Natural killer cell (primary cell): ENCODE measurements at regions of chr1 and their contacts with region 1.

Region 1: DNA sequence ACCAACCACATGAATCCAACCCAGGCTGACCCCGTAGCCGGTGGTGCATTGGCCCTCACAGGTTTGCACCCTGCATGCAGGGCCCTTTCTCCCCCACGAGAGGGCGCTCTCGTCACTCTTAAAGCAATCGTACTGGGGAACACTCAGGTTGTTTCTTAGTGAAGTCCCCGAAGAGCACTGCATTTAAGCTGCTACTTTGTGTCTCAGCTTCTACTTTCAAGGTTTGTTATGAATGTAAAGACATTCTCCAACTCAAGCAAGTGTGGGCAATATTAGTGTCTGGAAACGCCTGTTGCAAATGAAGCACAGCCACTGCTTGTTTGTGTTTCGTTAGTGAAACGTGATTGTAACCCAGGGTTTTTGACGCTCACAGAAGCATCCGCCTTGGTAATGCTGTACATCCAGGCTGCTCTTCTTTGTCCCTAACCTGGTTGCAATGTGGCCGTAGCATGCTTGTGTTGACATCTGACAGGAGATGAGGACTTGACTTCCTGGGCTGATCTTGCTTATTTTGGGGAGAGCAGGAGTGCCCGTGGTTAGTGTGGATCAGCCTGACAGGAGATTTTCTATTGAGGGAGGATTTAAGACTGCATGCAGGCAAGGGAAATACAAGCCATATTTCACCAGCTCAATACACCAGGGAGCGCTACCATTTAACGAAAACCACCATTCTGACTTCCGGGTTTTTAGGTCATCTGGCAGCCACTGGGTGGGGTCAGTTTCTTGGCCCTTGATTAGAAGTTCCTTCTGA is 79.8 kb downstream of the ST6GALNAC3 start:
- DNase-seq: peak; percentile 71 to 85
- ATAC-seq: peak; percentile 92 to 94 (median 94)
- H3K4me3 ChIP-seq: peak overlapping the region; percentile 36
- H3K4me3 Mint-ChIP-seq: peak overlapping the region; percentile 94
- H3K27ac ChIP-seq: peak overlapping the region; percentile 62
- H3K27ac Mint-ChIP-seq: peak overlapping the region; percentile 86 to 95
- H3K4me1 ChIP-seq: peaks cover 9% of the 10 kb centered on the region
- H3K4me1 Mint-ChIP-seq: peaks cover 13 to 15% of the 10 kb centered on the region in 2 donors
- H3K27me3 ChIP-seq: no peaks in the 10 kb centered on the region
- H3K27me3 Mint-ChIP-seq: no peaks in the 10 kb centered on the region
- CTCF ChIP-seq: peak; percentile 98

Region 2: DNA sequence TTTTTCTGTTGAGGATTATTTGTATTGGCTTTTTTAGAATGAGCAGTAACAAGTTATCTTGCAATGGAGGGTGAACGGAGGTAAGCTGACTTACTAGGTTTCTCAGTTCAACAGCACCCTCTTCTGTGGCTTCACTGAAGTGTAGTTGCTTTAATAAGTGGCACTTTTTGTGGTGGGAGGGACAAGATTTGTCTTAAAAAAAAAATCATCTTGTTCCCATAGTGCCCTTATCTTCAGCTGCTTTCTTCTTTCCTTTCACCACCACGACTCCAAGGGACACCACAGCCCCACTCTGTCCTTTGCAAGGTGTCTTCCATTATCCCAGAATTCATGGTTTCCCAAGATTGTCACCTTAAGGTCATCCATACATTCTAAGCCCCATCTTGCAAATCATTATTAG is 971.9 kb after region 1 on chr1:
- intact Hi-C with region 1: loop called (anchors 1 kb)
- DNase-seq: peak in 1 of 2 donors; percentile 63
- ATAC-seq: peak in 2 of 3 donors; percentile 31 to 50
- H3K4me3 ChIP-seq: no peak overlapping the region
- H3K4me3 Mint-ChIP-seq: no peak overlapping the region
- H3K27ac ChIP-seq: no peak overlapping the region
- H3K27ac Mint-ChIP-seq: no peak overlapping the region
- H3K4me1 ChIP-seq: no peaks in the 10 kb centered on the region
- H3K4me1 Mint-ChIP-seq: peaks cover 0 to 4% of the 10 kb centered on the region in 2 donors
- H3K27me3 ChIP-seq: no peaks in the 10 kb centered on the region
- H3K27me3 Mint-ChIP-seq: no peaks in the 10 kb centered on the region
- CTCF ChIP-seq: peak; percentile 9

Region 3: DNA sequence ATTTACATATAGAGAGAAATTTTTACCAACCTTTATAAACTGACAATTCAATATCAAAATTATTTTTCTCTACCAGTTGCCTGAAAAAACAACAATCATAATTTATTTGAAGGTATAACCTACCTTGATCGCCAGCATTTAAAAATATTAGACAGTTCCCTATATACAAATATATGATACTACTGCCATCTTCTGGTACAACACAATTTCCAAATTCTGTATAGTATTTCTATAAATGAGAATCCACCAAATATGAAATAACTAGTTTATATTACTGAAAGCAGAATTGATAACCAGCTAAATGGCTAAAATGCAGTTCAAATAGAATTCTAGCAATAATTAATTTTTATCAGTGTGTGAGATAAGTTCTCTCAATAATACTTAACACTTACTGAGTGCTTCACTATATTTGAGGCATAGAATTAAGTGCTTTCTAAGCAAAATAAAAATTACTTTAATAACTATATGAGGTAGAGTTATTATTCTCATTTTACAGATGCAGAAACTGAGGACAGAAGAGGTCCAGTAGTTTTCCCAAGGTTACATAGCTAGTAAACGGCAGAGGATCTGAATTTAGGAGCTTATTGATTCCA is 989.2 kb after region 1 on chr1:
- intact Hi-C with region 1: loop called (anchors 1 kb)
- DNase-seq: peak in 1 of 2 donors; percentile 44
- ATAC-seq: no peak
- H3K4me3 ChIP-seq: no peak overlapping the region
- H3K4me3 Mint-ChIP-seq: no peak overlapping the region
- H3K27ac ChIP-seq: no peak overlapping the region
- H3K27ac Mint-ChIP-seq: no peak overlapping the region
- H3K4me1 ChIP-seq: no peaks in the 10 kb centered on the region
- H3K4me1 Mint-ChIP-seq: peaks cover 0 to 5% of the 10 kb centered on the region in 2 donors
- H3K27me3 ChIP-seq: no peaks in the 10 kb centered on the region
- H3K27me3 Mint-ChIP-seq: no peaks in the 10 kb centered on the region
- CTCF ChIP-seq: no peak

Region 4: DNA sequence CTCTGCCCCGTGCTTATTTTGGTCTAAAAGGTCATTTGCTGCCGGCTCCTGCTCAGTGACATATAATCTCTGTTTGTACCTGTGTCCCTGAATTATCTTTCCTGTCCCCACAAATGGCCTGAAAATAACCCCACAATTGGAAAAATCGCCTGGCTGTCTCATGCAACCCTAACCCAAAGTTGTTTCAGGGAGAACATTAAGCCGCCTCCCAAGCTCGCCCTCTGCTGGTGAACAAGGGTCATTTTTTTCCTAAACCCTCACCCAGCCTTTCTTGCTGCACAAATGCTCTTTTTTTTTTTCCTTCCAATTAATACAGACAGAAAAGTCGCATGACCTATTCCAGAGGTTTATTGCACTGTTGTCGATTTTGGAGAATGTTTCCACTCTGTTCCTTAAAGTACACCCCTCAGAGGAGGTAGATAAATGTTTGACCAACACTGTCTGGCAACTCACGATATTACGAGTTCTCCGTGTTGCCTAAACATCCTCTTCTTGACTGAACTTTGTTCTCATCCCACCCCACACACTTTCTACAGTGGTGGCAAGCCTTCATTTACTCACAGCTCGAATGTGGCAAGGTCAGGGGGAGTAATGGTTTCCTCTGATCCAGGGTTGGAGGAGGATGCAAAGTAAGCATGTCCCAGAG is 1379.4 kb after region 1 on chr1:
- intact Hi-C with region 1: loop called (anchors 1 kb)
- DNase-seq: peak; percentile 42 to 83
- ATAC-seq: peak in 2 of 3 donors; percentile 75 to 76
- H3K4me3 ChIP-seq: no peak overlapping the region
- H3K4me3 Mint-ChIP-seq: peak overlapping the region; percentile 54
- H3K27ac ChIP-seq: no peak overlapping the region
- H3K27ac Mint-ChIP-seq: peak overlapping the region in 1 of 2 donors; percentile 41
- H3K4me1 ChIP-seq: peaks cover 9% of the 10 kb centered on the region
- H3K4me1 Mint-ChIP-seq: peaks cover 8 to 10% of the 10 kb centered on the region in 2 donors
- H3K27me3 ChIP-seq: no peaks in the 10 kb centered on the region
- H3K27me3 Mint-ChIP-seq: no peaks in the 10 kb centered on the region
- CTCF ChIP-seq: peak; percentile 76

Region 5: DNA sequence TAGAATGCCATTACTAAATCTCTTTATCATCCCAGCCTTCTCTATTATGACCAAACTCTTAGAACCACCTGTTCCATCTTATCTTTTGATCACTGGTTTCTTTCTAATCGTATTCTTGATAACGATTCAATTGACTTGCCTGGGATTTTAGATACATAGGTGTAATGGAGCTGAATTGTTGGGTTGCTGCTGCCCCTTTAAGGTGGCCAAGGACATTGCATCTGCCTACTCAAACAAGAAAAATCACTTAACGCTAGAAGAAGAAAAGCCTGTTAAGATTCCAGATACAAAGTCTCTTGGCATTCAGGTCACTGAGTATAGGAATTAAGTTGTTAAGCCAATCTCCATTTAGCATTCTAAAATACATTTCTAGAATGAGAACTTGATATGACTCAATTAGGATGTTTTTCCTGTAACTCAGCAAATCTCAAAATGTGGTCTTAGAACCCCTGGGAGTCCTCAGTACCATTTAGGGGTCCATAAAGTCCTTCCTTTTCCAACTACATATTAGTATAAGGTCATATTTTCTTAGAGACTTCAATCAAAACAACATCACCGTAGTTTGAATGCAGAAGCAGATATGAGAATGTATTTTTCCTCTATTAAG is 1746.4 kb after region 1 on chr1:
- intact Hi-C with region 1: loop called (anchors 5 kb)
- DNase-seq: peak in 1 of 2 donors; percentile 43
- ATAC-seq: peak in 1 of 3 donors; percentile 39
- H3K4me3 ChIP-seq: no peak overlapping the region
- H3K4me3 Mint-ChIP-seq: no peak overlapping the region
- H3K27ac ChIP-seq: no peak overlapping the region
- H3K27ac Mint-ChIP-seq: no peak overlapping the region
- H3K4me1 ChIP-seq: no peaks in the 10 kb centered on the region
- H3K4me1 Mint-ChIP-seq: no peaks in the 10 kb centered on the region
- H3K27me3 ChIP-seq: no peaks in the 10 kb centered on the region
- H3K27me3 Mint-ChIP-seq: peaks cover 0 to 2% of the 10 kb centered on the region in 2 donors
- CTCF ChIP-seq: peak; percentile 8